ENCODE measurements at regions of chr1 and their contacts with region 1.

Region 1: DNA sequence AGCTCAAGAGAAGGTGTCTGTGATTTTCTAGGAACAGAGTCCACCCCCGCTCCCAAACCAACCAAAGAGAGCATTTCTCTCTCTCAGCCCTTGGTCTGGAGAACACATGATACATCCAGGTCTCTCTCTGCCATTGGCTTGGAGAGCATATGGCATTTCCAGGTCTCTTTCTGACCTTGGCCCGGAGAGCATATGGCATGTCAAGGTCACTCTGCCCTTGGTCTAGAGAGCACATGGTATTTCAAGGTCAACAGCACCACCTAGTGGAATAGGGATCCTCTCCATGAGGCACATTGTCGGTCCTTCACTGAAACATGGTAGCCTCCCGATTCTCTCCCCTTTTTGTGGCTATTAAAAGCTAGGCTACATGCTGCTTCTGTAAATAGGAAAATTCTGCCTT is 437.7 kb upstream of the OLFM3 start:
- DNase-seq: no peak
- H3K4me3 ChIP-seq: no peak overlapping the region
- H3K27ac ChIP-seq: no peak overlapping the region
- H3K27me3 ChIP-seq: no peaks in the 10 kb centered on the region
- CTCF ChIP-seq: peak in 53 of 56 donors; percentile 16 to 64 (median 48)

Region 2: GRCh38 chr1:101520302-101520701 is 914.1 kb before region 1 on chr1:
- intact Hi-C with region 1: loop called in 1 of 2 experiments (anchors 10 kb)
- DNase-seq: peak in 2 of 10 donors; percentile 4 to 28
- H3K4me3 ChIP-seq: no peak overlapping the region
- H3K27ac ChIP-seq: no peak overlapping the region
- H3K27me3 ChIP-seq: no peaks in the 10 kb centered on the region
- CTCF ChIP-seq: peak in 55 of 56 donors; percentile 19 to 76 (median 61)

Region 3: DNA sequence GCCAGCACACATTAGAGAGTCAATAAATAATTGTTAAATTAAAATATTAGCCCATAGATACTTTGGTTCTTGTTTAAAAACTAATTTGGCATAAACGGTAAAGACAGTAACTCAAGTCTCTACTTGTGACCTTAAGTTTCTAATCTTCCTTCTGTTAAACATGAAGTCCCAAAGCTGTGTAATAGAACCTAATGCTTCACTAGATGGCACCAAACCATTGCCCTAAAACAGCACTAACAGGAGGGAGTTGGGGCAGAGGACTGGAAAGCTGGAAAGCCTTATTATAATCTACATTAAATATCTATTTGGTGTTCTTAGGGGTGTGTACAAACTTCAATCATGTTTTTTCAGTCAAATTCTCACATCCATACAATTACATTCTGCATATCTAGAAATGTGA is 614.4 kb before region 1 on chr1:
- intact Hi-C with region 1: loop called in 1 of 2 experiments (anchors 10 kb)
- DNase-seq: peak in 1 of 10 donors; percentile 50
- H3K4me3 ChIP-seq: no peak overlapping the region
- H3K27ac ChIP-seq: no peak overlapping the region
- H3K27me3 ChIP-seq: no peaks in the 10 kb centered on the region
- CTCF ChIP-seq: peak in 53 of 56 donors; percentile 12 to 70 (median 45)

Region 4: GRCh38 chr1:102186536-102186935 is 247.9 kb before region 1 on chr1:
- intact Hi-C with region 1: no loop called
- DNase-seq: no peak
- H3K4me3 ChIP-seq: no peak overlapping the region
- H3K27ac ChIP-seq: no peak overlapping the region
- H3K27me3 ChIP-seq: no peaks in the 10 kb centered on the region
- CTCF ChIP-seq: no peak